Right ventricle myocardium superior (tissue), 1 donor: ENCODE measurements at regions of chr3 and their contacts with region 1.

Region 1: GRCh38 chr3:51384726-51385473 is at the start of gene MANF:
- DNase-seq: peak; percentile 99
- ATAC-seq: peak; percentile 98
- total RNA-seq, gene MANF: 41.1 TPM

Region 2: GRCh38 chr3:51682079-51682478 is 297.2 kb after region 1 on chr3:
- intact Hi-C with region 1: loop called (anchors 10 kb)
- DNase-seq: peak; percentile 59
- ATAC-seq: peak; percentile 85